ENCODE measurements at regions of chr2 and their contacts with region 1.

Region 1: DNA sequence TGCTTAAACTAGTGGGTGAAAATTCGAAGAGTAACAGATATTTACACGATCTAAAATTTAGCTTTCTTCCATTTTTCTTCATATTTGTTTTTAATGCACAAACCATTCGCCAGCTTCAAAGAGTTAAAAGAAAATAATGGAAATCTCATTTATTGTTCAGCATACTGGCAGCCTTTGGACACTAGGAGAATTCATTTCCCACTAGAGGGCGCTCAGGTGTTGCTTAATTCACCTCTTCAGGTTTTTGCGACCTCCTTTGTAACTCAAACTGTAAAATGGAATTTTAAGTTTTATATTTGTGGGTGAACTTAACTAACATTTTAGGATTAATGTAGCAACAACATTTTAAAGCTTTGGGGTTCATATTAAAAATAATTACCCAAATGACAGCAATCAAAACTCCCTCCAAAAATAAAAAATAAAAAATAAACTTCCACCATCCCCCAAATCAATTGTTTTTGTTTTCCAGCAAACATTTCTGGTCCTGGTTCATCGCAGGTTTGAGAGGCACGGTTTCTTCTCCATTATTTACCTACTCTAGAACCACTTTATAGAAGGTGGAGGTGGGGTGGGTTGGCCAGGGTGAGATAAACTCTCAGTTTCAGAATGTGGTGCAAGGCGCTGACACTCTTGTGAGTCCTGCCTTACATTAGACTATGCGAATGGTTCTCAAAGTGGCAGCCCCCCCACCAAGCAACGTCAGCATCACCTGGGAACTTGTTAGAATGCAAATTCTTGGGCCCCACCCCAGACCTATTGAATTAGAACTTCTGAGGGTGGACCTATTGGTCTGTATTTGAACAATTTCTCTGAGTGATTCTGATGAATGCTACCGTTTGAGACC is 24.7 kb upstream of the PNPT1 start:
- DNase-seq: peak; percentile 76
- H3K4me3 ChIP-seq: no peak overlapping the region
- H3K27ac ChIP-seq: no peak overlapping the region
- H3K4me1 ChIP-seq: no peaks in the 10 kb centered on the region
- H3K27me3 ChIP-seq: no peaks in the 10 kb centered on the region
- CTCF ChIP-seq: peak; percentile 67

Region 2: GRCh38 chr2:55961318-55961911 is 243.0 kb after region 1 on chr2:
- intact Hi-C with region 1: loop called (anchors 5 kb)
- DNase-seq: no peak
- H3K4me3 ChIP-seq: no peak overlapping the region
- H3K27ac ChIP-seq: no peak overlapping the region
- H3K4me1 ChIP-seq: no peaks in the 10 kb centered on the region
- H3K27me3 ChIP-seq: no peaks in the 10 kb centered on the region
- CTCF ChIP-seq: peak; percentile 62

Region 3: DNA sequence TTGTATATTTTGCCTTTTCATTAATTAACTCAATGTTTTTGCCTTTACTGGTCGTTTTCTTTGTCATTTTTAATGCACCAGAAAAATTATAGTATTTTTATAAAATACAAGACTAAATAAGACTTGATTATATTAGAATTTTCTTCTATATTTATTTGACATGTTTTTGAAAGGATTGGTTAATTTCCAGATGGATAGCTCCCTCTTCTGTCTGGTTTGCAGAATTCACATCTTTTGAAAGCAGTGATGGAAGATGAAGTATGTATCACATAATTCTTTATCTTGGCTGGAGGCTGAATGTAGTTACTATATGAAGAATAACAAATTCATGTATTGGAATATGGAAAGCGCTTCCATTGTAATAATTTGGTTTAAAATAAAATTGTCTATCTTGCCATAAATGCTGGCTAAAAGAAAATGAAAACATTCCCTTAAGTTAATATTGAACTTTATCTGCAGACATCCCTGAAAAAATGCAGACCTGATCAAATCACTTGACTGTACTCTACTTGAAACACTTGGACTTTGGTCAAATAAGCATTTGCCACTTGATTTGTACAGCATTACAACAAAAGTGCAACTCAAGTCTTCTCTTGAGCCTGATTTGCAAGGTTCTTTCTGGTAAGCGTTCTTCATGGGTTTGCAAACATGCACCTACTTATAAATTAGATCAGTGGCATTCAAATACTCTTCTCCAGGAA is 291.5 kb after region 1 on chr2:
- intact Hi-C with region 1: loop called (anchors 5 kb)
- DNase-seq: no peak
- H3K4me3 ChIP-seq: no peak overlapping the region
- H3K27ac ChIP-seq: no peak overlapping the region
- H3K4me1 ChIP-seq: no peaks in the 10 kb centered on the region
- H3K27me3 ChIP-seq: no peaks in the 10 kb centered on the region
- CTCF ChIP-seq: no peak

Region 4: DNA sequence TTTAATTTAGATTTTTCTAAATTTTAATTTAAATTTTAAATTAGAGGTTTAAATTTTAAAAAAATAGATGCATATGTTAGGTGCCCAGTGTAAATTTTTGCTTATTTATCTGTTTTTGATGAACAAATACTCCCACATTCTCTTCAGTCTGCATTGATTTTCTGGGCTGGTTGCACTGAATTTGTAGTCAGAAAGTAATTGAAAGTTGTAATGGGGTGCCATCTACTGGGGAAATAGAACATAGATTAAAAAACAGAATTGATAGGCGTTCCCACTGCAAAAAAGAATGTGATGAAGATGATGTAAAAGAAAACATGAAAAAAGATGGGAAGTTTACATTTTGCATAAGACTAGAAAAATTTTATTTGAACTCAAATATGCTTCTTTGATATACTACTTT is 413.8 kb after region 1 on chr2:
- intact Hi-C with region 1: loop called (anchors 5 kb)
- DNase-seq: no peak
- H3K4me3 ChIP-seq: no peak overlapping the region
- H3K27ac ChIP-seq: no peak overlapping the region
- H3K4me1 ChIP-seq: no peaks in the 10 kb centered on the region
- H3K27me3 ChIP-seq: no peaks in the 10 kb centered on the region
- CTCF ChIP-seq: no peak